ENCODE measurements at regions of chr15 and their contacts with region 1.

Region 1: GRCh38 chr15:65077981-65078352 is 1.4 kb downstream of the KBTBD13 start:
- DNase-seq: peak; percentile 85
- H3K4me3 Mint-ChIP-seq: no peak overlapping the region
- H3K27ac Mint-ChIP-seq: no peak overlapping the region
- H3K4me1 Mint-ChIP-seq: peaks cover 15% of the 10 kb centered on the region
- H3K27me3 Mint-ChIP-seq: peaks cover 24% of the 10 kb centered on the region

Region 2: DNA sequence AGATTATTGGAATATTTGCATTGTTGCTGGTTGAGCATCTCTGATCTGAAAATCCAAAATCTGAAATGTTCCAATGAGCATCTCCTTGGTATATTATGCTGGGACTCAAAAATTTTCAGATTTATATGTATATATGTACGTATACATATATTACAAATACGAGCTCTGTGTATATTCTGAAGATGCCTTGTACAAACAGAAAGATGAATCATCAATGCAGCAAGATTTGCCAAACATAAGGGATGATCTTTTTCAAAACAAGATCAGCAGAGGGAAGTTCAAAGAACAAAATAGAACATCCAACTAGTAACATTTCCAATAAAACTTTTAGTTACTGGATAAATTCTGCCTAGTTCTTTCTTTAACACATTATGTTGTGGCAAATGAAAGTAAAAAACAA is 1286.7 kb before region 1 on chr15:
- intact Hi-C with region 1: no loop called
- DNase-seq: no peak
- H3K4me3 Mint-ChIP-seq: no peak overlapping the region
- H3K27ac Mint-ChIP-seq: no peak overlapping the region
- H3K4me1 Mint-ChIP-seq: peaks cover 12% of the 10 kb centered on the region
- H3K27me3 Mint-ChIP-seq: no peaks in the 10 kb centered on the region

Region 3: DNA sequence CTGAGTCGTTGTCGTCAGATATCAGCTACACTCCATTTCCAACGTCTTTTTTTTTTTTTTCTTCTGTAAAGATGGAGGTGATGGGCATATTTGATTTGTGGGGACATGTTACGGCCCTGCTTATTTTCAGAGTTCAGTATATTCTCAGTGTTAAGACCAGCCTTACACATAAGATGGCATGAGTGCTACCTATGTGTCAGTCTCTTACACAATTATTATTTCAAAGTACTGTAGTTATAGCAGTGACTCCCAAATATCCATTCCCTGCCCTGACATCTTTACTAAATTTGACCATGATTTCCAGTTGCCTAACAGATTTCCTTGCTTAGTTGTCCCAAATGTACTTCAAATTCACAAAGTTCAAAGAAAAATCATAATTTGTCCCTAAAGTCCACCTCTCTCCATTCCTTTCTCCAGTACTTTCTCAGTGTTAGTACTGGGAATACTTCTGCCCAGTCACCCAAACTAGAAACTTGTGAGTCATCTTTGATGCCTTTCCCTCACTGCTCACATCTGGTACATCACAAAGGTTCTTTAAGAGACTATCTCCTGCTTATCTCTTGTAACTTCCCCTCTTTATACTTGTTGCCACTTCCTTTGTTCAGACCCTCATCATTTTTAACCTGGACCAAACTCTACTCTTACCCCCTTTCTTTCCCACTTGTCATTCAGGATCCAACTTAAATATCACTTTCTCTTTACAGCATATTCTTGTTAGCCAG is 550.5 kb before region 1 on chr15:
- intact Hi-C with region 1: no loop called
- DNase-seq: no peak
- H3K4me3 Mint-ChIP-seq: no peak overlapping the region
- H3K27ac Mint-ChIP-seq: peak overlapping the region; percentile 1
- H3K4me1 Mint-ChIP-seq: peaks cover 51% of the 10 kb centered on the region
- H3K27me3 Mint-ChIP-seq: no peaks in the 10 kb centered on the region

Region 4: DNA sequence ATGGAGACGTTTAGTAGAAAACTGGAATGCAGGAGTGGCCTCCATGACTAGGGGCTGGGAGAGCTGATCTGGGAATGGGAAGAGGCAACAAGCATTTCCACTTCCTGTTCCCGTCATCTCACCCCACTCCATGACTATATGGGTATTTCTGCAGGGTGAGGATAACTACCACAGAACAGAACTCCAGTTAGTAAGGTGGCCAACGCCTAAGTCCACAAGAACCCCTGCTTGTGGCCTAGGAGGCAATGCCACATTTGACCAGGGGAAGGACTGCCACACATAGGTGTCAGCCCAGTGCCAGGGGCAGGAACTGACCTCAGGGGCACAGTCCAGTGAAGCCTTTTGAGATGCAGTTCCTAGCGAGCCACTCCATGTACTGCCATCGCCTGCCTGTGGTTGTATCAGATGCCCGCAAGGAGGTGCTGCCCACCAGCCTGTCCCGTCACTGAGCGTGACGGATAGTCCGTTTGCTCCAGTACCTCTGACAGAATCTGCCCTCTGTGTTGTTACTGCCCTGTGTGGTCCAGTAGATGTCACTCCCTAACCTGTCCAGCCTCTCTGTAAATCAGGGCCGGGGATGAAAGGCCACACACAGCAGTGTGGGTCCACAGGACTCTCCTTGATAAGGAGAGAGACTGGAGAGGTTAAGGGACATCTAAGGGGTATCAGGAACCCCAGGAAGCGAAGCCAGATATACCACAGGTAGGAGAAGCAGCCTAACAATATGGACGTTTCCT is 45.0 kb before region 1 on chr15:
- intact Hi-C with region 1: loop called (anchors 1 kb)
- DNase-seq: peak; percentile 75
- H3K4me3 Mint-ChIP-seq: no peak overlapping the region
- H3K27ac Mint-ChIP-seq: no peak overlapping the region
- H3K4me1 Mint-ChIP-seq: peaks cover 19% of the 10 kb centered on the region
- H3K27me3 Mint-ChIP-seq: peaks cover 16% of the 10 kb centered on the region

Measured in activated CD4-positive, alpha-beta T cell treated with anti-CD3 and anti-CD28 coated beads, Interleukin-2, amount 10 ng/mL, durations not matched to agents 24 days and 14 days (primary cell).